ENCODE measurements at regions of chr3 and their contacts with region 1.

Region 1: GRCh38 chr3:49007068-49007770 is at the start of gene WDR6:
- DNase-seq: peak; percentile 95 to 98 (median 97)
- H3K4me3 ChIP-seq: peak within 1 kb of the TSS; percentile 81 to 97
- H3K4me3 Mint-ChIP-seq: peak within 1 kb of the TSS; percentile 93 to 99 (median 98)
- H3K27ac ChIP-seq: peak within 1 kb of the TSS; percentile 87
- H3K27ac Mint-ChIP-seq: peak within 1 kb of the TSS; percentile 95 to 100 (median 99)
- H3K4me1 ChIP-seq: peaks cover 20% of the 10 kb centered on the region
- H3K4me1 Mint-ChIP-seq: peaks cover 15 to 37% (median 24%) of the 10 kb centered on the region in 4 donors
- H3K27me3 ChIP-seq: no peaks in the 10 kb centered on the region
- H3K27me3 Mint-ChIP-seq: no peaks in the 10 kb centered on the region
- total RNA-seq, gene WDR6: 287 to 295 TPM

Region 2: DNA sequence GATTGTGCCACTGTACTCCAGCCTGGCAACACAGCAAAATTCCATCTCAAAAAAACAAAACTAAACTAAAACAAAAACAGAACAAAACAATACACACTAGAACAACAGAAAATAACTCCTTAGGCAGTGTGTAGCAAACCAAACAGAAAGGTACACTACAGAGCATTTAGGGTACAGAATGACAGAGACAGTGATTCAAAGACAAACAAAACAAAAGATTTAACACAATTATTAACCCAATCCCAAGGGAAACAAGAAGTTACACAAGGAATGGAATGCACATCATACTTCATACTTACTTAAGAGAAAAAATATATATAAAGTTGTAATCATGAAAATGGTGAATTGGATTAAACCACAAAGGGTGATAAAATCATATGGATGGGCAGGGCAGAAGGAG is 121.5 kb before region 1 on chr3:
- CTCF ChIA-PET with region 1: no interaction called
- POLR2A ChIA-PET with region 1: no interaction called
- intact Hi-C with region 1: no loop called
- DNase-seq: no peak
- H3K4me3 ChIP-seq: no peak overlapping the region
- H3K4me3 Mint-ChIP-seq: no peak overlapping the region
- H3K27ac ChIP-seq: no peak overlapping the region
- H3K27ac Mint-ChIP-seq: no peak overlapping the region
- H3K4me1 ChIP-seq: no peaks in the 10 kb centered on the region
- H3K4me1 Mint-ChIP-seq: peaks cover 1 to 23% (median 13%) of the 10 kb centered on the region in 4 donors
- H3K27me3 ChIP-seq: no peaks in the 10 kb centered on the region
- H3K27me3 Mint-ChIP-seq: no peaks in the 10 kb centered on the region

Region 3: GRCh38 chr3:49021813-49022687 is 14.8 kb after region 1 on chr3 and contains the start of gene NDUFAF3:
- CTCF ChIA-PET with region 1: interaction called, 173 read pairs
- POLR2A ChIA-PET with region 1: interaction called, 629 read pairs
- intact Hi-C with region 1: loop called (anchors 1 kb)
- DNase-seq: peak; percentile 89 to 91 (median 90)
- H3K4me3 ChIP-seq: peak within 1 kb of the TSS; percentile 65 to 98
- H3K4me3 Mint-ChIP-seq: peak within 1 kb of the TSS; percentile 94 to 98 (median 96)
- H3K27ac ChIP-seq: peak within 1 kb of the TSS; percentile 97
- H3K27ac Mint-ChIP-seq: peak within 1 kb of the TSS; percentile 93 to 99 (median 98)
- H3K4me1 ChIP-seq: peaks cover 43% of the 10 kb centered on the region
- H3K4me1 Mint-ChIP-seq: peaks cover 16 to 74% (median 41%) of the 10 kb centered on the region in 4 donors
- H3K27me3 ChIP-seq: no peaks in the 10 kb centered on the region
- H3K27me3 Mint-ChIP-seq: no peaks in the 10 kb centered on the region
- total RNA-seq, gene NDUFAF3: 77.9 to 85.7 TPM

Region 4: DNA sequence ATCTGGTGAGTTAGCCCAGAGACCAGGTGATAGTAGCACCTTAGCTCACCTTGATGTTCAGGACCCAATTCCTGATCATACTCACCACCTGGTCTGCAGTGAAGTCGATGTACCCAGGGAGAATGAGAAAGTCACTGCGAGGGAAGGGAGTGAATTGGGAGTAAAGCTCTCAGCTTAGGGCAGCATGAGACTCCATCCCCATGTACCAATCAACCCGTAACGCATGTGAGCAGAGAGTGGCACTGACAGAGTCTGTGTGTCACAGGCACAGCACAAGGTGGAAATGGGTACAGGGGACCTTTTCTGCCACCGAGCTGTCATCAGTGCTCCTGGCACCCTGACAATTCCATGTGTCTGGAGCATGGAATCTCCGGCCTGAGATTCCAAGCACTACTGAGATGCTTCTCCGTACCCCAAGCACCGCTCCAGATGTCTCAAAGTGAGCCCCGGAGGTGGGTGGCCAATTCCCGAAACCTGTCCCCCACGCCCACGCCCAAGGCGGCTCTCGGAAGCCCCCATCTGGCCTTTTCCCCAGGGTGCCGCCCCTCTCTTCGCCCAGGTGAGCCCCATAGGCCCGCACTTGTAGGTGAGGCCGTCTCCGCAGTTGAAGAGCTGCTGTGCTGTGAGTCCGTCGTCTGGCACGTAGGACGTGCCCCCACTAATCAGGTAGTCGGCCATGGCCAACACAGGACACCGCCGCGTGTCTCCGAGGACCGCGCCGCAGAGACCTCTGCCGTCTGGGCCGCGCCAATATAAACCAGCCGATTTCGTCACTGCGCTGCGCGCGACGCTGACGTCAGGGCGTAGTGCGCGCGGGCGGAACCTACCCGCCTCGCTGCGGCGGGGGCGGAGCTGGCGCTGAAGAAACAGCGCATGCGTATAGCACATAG is 21.7 kb after region 1 on chr3 and contains the start of gene IMPDH2:
- CTCF ChIA-PET with region 1: interaction called, 173 read pairs
- POLR2A ChIA-PET with region 1: interaction called, 629 read pairs
- intact Hi-C with region 1: loop called (anchors 1 kb)
- DNase-seq: peak; percentile 91 to 93 (median 93)
- H3K4me3 ChIP-seq: peak within 1 kb of the TSS; percentile 64 to 77
- H3K4me3 Mint-ChIP-seq: peak within 1 kb of the TSS; percentile 90 to 97 (median 92)
- H3K27ac ChIP-seq: peak within 1 kb of the TSS; percentile 93
- H3K27ac Mint-ChIP-seq: peak within 1 kb of the TSS; percentile 94 to 100 (median 99)
- H3K4me1 ChIP-seq: peaks cover 21% of the 10 kb centered on the region
- H3K4me1 Mint-ChIP-seq: peaks cover 17 to 52% (median 24%) of the 10 kb centered on the region in 4 donors
- H3K27me3 ChIP-seq: no peaks in the 10 kb centered on the region
- H3K27me3 Mint-ChIP-seq: no peaks in the 10 kb centered on the region
- total RNA-seq, gene IMPDH2: 87.5 to 89.6 TPM

Region 5: DNA sequence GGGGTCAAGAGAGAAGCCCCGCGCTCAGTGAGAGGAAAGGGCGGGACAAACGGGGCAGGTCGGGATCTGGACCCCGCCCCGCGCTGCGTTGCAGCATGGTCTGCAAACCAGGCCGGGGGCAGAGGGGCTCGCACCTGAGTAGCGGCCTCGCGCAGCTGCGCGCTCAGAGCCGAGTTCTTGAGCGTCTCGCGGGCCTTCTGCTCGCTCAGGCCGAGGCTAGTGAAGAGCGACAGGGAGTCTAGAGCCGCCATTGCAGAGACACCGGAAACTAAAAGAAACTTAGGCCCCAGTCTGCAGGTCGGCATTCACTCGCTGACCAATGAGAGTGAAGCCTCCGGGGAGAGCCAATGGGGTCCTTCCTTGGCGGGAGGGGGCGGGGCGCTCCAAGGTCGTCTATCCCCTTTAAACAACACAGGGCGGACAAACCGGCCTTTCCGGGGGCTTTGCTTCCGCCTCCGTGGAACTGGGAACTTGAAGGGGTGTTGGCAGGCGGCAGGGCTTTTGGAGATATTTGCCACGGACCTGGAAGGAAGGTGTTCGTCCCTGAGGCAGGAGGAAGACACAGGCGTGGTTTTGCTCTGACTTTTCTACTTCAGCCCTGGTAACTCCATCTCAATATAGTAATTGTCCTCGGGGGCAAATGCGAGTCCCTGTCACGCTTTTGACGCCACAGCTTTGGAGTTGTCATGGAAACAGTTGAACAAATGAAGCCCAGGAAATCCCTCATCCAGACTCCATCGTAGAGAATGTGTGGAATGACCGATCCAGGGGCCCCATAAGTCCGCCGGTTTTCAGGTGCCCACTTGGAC is 97.5 kb after region 1 on chr3 and contains the start of gene QARS1:
- CTCF ChIA-PET with region 1: no interaction called
- POLR2A ChIA-PET with region 1: interaction called, 11 read pairs
- intact Hi-C with region 1: no loop called
- DNase-seq: peak; percentile 86 to 93 (median 88)
- H3K4me3 ChIP-seq: peak within 1 kb of the TSS; percentile 64 to 94
- H3K4me3 Mint-ChIP-seq: peak within 1 kb of the TSS; percentile 96 to 99 (median 98)
- H3K27ac ChIP-seq: peak within 1 kb of the TSS; percentile 92
- H3K27ac Mint-ChIP-seq: peak within 1 kb of the TSS; percentile 94 to 99 (median 98)
- H3K4me1 ChIP-seq: peaks cover 21% of the 10 kb centered on the region
- H3K4me1 Mint-ChIP-seq: peaks cover 12 to 38% (median 26%) of the 10 kb centered on the region in 4 donors
- H3K27me3 ChIP-seq: no peaks in the 10 kb centered on the region
- H3K27me3 Mint-ChIP-seq: no peaks in the 10 kb centered on the region
- total RNA-seq, gene QARS1: 199 TPM